SK-N-SH (cell line): ENCODE measurements at regions of chr12 and their contacts with region 1.

Region 1: DNA sequence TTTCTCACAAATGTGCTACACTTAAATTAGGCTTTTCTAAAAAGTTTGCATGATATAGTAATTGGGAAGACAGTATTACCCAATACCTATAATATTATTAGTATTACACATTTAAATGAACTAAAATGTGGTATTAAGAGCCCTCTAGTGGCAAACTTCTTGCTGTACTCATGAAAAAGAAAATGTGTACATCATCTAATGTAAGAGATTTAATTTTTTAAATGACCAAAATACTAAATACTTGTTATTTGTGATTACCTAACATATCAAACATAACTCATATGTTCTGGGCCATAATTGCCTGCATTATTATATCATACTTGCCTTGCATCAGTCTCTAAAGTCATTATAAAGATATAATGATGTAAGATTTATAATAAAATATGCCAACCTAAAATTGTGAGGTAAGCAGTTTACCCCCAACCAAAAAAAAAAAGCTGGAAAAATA is 64.2 kb downstream of the DNAI7 start:
- DNase-seq: peak; percentile 33
- H3K4me3 ChIP-seq: peak overlapping the region in 1 of 2 experiments; percentile 17; a peak in 1 of 4 replicates
- H3K27ac ChIP-seq: no peak overlapping the region
- H3K4me1 ChIP-seq: no peaks in the 10 kb centered on the region
- H3K27me3 ChIP-seq: no peaks in the 10 kb centered on the region
- CTCF ChIP-seq: peak; percentile 87
- EP300 ChIP-seq: no peak
- RAD21 ChIP-seq: peak; percentile 77

Region 2: DNA sequence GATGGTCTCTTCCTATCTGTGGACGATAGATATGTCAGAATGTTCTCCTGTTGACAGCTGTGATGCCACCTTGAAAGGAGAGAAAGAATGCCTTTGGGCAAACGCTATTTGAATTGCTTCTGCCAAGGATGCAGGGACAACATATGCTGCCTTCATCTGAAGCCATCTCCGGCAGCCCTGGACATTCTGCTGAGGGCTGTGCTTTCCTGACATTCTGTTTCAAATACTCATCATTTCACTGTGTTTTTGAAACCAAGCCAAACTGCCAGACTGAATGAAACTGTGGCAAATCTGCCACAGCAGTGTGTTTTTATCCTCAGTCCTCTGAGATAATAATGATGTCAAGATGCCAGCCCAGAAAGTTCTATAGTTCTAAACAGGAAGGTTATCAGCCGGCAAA is 96.1 kb before region 1 on chr12:
- CTCF ChIA-PET with region 1: no interaction called
- POLR2A ChIA-PET with region 1: no interaction called
- DNase-seq: peak; percentile 14
- H3K4me3 ChIP-seq: no peak overlapping the region; a peak in 1 of 4 replicates
- H3K27ac ChIP-seq: no peak overlapping the region
- H3K4me1 ChIP-seq: peaks cover 0 to 6% of the 10 kb centered on the region in 2 experiments; a peak in 2 of 4 replicates
- H3K27me3 ChIP-seq: no peaks in the 10 kb centered on the region; the same call in 1 of the 2 replicates
- CTCF ChIP-seq: no peak
- EP300 ChIP-seq: no peak
- RAD21 ChIP-seq: no peak

Region 3: DNA sequence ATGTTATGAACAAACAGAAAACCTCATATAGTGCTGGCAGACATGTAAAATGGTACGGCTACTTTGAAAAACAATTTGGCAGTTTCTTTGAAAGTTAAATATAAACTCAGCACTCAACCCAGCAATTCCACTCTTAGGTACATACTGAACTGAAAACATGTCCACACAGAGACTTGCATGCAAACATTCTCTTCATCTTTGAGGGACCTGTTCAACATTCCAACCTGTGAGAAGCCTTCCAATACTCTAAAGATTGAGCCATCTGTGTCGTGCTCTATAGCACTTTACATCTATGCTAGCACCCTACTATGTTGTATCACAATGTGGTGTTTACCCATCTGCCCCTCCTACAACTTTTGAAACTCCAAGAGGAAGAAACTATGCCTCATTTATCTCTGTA is 15.1 kb before region 1 on chr12:
- CTCF ChIA-PET with region 1: interaction called, 12 read pairs
- POLR2A ChIA-PET with region 1: no interaction called
- DNase-seq: no peak
- H3K4me3 ChIP-seq: no peak overlapping the region
- H3K27ac ChIP-seq: no peak overlapping the region
- H3K4me1 ChIP-seq: no peaks in the 10 kb centered on the region
- H3K27me3 ChIP-seq: no peaks in the 10 kb centered on the region
- CTCF ChIP-seq: no peak
- EP300 ChIP-seq: no peak
- RAD21 ChIP-seq: no peak